PC-9 (cell line): ENCODE measurements at regions of chr6 and their contacts with region 1.

Region 1: GRCh38 chr6:27213544-27214125 is 33.9 kb upstream of the PRSS16 start:
- DNase-seq: peak; percentile 61
- H3K4me3 ChIP-seq: peak overlapping the region; percentile 73
- H3K27ac ChIP-seq: no peak overlapping the region
- H3K4me1 ChIP-seq: 0 out of 2 replicates have a peak, but pooled peaks cover 4% of the 10 kb centered on the region
- H3K27me3 ChIP-seq: no peaks in the 10 kb centered on the region
- CTCF ChIP-seq: no peak

Region 2: GRCh38 chr6:27078734-27079357 is 134.8 kb before region 1 on chr6:
- CTCF ChIA-PET with region 1: interaction called, 10 read pairs
- POLR2A ChIA-PET with region 1: no interaction called
- intact Hi-C with region 1: no loop called
- DNase-seq: peak; percentile 44 to 57
- H3K4me3 ChIP-seq: peak overlapping the region; percentile 60; the same call in 1 of the 2 replicates
- H3K27ac ChIP-seq: no peak overlapping the region
- H3K4me1 ChIP-seq: 0 out of 2 replicates have a peak, but pooled peaks cover 3% of the 10 kb centered on the region
- H3K27me3 ChIP-seq: no peaks in the 10 kb centered on the region
- CTCF ChIP-seq: peak; percentile 90

Region 3: GRCh38 chr6:27230758-27231111 is 17.1 kb after region 1 on chr6:
- CTCF ChIA-PET with region 1: interaction called, 22 read pairs
- POLR2A ChIA-PET with region 1: no interaction called
- intact Hi-C with region 1: loop called (anchors 2 kb)
- DNase-seq: peak; percentile 25 to 41
- H3K4me3 ChIP-seq: peak overlapping the region; percentile 53
- H3K27ac ChIP-seq: peak overlapping the region; percentile 22; the same call in 1 of the 2 replicates
- H3K4me1 ChIP-seq: peaks cover 9% of the 10 kb centered on the region; the same call in 1 of the 2 replicates
- H3K27me3 ChIP-seq: no peaks in the 10 kb centered on the region
- CTCF ChIP-seq: no peak

Region 4: DNA sequence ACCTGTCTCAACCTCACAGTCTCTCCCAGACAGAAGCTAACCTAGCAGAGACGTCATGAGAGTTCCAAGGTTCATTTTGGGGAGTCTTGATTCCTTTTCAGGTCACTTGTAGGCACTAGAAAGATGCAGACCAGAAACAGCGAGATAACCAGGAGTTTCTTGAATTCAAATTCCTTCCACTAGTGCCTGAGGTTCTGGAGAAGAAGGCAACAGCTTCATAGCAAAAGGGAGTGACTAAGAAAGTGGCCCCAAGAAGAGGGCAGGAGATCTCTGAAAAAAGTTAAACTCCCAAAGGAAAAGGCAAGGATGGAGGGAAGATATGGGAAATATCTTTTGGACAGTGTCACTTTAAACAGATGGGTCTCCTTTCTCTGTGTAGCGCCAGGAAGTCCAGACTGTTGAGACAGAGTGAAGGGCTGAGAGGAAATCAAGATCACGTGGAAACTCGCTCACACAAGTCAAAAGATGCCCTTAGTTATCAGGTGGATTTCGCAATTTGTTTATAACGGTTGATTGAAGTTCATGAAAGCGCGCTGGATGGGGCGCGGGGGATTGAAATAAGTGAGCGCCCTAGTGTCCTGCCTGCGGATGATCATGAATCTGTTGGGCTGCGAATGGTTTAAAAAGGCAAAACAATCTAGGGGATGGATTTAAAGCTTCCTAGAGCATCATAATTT is 29.1 kb after region 1 on chr6:
- CTCF ChIA-PET with region 1: no interaction called
- POLR2A ChIA-PET with region 1: no interaction called
- intact Hi-C with region 1: no loop called
- DNase-seq: no peak
- H3K4me3 ChIP-seq: no peak overlapping the region
- H3K27ac ChIP-seq: no peak overlapping the region
- H3K4me1 ChIP-seq: peaks cover 2% of the 10 kb centered on the region; the same call in 1 of the 2 replicates
- H3K27me3 ChIP-seq: peaks cover 3% of the 10 kb centered on the region; the same call in 1 of the 2 replicates
- CTCF ChIP-seq: no peak

Region 5: GRCh38 chr6:27479319-27480182 is 265.9 kb after region 1 on chr6:
- CTCF ChIA-PET with region 1: no interaction called
- POLR2A ChIA-PET with region 1: no interaction called
- intact Hi-C with region 1: loop called (anchors 1 kb)
- DNase-seq: peak; percentile 84
- H3K4me3 ChIP-seq: peak overlapping the region; percentile 66
- H3K27ac ChIP-seq: peak overlapping the region; percentile 82
- H3K4me1 ChIP-seq: peaks cover 9% of the 10 kb centered on the region; the same call in 1 of the 2 replicates
- H3K27me3 ChIP-seq: no peaks in the 10 kb centered on the region
- CTCF ChIP-seq: no peak

Region 6: GRCh38 chr6:27687154-27688013 is 473.7 kb after region 1 on chr6:
- CTCF ChIA-PET with region 1: interaction called, 3 read pairs
- POLR2A ChIA-PET with region 1: no interaction called
- intact Hi-C with region 1: loop called (anchors 10 kb)
- DNase-seq: peak; percentile 69 to 87
- H3K4me3 ChIP-seq: peak overlapping the region; percentile 61
- H3K27ac ChIP-seq: peak overlapping the region; percentile 6; the same call in 1 of the 2 replicates
- H3K4me1 ChIP-seq: peaks cover 6% of the 10 kb centered on the region; the same call in 1 of the 2 replicates
- H3K27me3 ChIP-seq: no peaks in the 10 kb centered on the region
- CTCF ChIP-seq: peak; percentile 73; the same call in 1 of the 2 replicates